Lower lobe of right lung (tissue), 2 donors: ENCODE measurements at regions of chr11 and their contacts with region 1.

Region 1: DNA sequence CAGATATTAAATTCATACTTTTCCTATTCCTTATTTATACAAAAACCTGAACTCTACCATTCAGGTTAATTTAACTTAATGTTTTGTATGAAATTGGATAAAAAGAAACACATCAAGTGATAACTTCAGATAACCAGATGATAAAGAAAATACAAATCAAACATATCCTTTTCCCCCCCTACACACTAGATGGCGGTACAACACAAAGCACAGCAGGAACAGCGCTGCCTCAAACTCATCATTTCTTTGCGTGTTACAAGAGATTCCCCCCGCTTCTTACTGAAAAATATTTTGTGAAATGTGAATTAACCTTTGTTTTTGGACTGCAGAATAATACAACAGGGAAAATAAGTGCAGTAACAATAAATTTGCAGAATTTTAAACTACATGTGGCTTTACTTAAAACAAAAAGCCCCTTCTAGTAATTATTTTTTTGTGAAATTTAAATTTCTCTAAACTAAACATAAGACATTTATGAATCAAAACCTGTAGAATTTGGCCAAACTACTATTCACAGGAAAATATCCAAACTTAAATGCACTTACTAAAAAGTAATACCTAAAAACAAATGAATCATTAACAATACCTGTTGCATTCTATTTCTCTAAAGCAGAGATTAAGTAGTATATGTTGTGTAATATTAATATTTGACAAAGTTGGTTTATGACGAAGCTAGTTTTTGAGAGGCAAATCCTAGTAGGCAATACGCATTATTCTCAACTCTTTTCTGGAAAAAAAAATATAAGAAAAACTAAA is 74.4 kb downstream of the ARHGAP32 start:
- DNase-seq: no peak
- ATAC-seq: peak in 1 of 2 donors; percentile 71
- H3K4me3 ChIP-seq: no peak overlapping the region
- H3K27ac ChIP-seq: no peak overlapping the region
- H3K4me1 ChIP-seq: no peaks in the 10 kb centered on the region
- H3K27me3 ChIP-seq: no peaks in the 10 kb centered on the region
- CTCF ChIP-seq: peak; percentile 79

Region 2: GRCh38 chr11:128709402-128709801 is 408.4 kb before region 1 on chr11:
- intact Hi-C with region 1: no loop called
- DNase-seq: no peak
- ATAC-seq: peak in 1 of 2 donors; percentile 51
- H3K4me3 ChIP-seq: no peak overlapping the region
- H3K27ac ChIP-seq: peak overlapping the region; percentile 44
- H3K4me1 ChIP-seq: peaks cover 84% of the 10 kb centered on the region
- H3K27me3 ChIP-seq: no peaks in the 10 kb centered on the region
- CTCF ChIP-seq: no peak

Region 3: GRCh38 chr11:129331871-129332274 is 214.1 kb after region 1 on chr11:
- intact Hi-C with region 1: loop called (anchors 5 kb)
- DNase-seq: peak; percentile 85
- ATAC-seq: peak; percentile 94 to 98
- H3K4me3 ChIP-seq: no peak overlapping the region
- H3K27ac ChIP-seq: no peak overlapping the region
- H3K4me1 ChIP-seq: no peaks in the 10 kb centered on the region
- H3K27me3 ChIP-seq: no peaks in the 10 kb centered on the region
- CTCF ChIP-seq: peak; percentile 89